Heart right ventricle (tissue), 16 donors: ENCODE measurements at regions of chr2 and their contacts with region 1.

Region 1: DNA sequence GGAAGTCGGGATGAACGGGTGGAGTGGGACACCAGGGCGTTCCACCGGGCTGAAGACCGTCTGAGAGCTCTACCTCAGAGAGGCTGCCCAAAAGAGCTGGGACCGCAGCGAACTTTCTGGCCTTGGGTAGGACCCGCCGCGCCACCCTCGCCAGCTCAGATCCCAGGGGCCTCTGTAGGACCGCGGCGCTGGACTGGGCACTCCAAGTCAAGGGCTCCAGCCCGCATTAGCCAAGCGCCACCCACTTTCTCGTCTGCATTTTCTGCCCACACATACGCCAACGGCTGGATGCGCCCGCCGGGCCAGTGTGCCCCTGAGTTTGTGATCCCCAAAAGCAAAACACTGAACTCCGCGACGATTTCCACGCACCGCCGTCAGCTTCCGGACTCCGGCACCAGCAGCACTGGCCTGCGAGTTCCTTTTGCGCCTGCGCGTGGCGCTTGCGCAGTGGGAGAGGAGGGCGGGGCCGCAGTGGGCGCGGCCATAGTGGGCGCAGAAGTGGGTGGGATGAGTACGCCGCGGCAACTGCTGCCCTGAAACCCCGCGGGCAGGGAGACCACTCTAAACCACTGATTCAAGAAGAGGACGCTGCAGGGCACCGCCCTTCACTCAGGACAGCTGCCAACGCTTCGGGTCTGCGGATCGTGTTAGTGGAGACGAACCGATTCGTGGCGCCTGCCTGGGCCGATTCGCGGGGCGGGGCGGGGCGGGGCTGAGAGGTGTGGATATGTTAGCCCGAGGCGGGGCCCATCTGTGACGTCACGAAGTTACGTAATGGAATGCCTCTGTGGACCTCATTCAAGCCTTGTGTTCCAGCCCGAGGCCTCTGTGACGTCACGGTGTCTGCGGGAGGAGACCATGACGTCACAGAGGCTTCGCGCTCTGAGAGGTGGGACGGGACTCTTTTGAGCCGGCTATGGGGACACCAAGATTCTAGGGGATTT is 10.5 kb downstream of the OSR1 start:
- DNase-seq: peak; percentile 93 to 94
- ATAC-seq: peak; percentile 94 to 99 (median 98)
- H3K4me3 ChIP-seq: peak overlapping the region; percentile 62 to 97 (median 78)
- H3K27ac ChIP-seq: peak overlapping the region; percentile 79 to 97 (median 94)
- H3K4me1 ChIP-seq: peaks cover 3 to 36% (median 29%) of the 10 kb centered on the region in 9 donors
- H3K27me3 ChIP-seq: peaks cover 0 to 36% (median 24%) of the 10 kb centered on the region in 7 donors
- CTCF ChIP-seq: no peak

Region 2: GRCh38 chr2:18435421-18436037 is 912.4 kb before region 1 on chr2:
- intact Hi-C with region 1: loop called in 1 of 10 experiments (anchors 10 kb)
- DNase-seq: peak in 1 of 2 donors; percentile 35
- ATAC-seq: peak in 3 of 8 donors; percentile 27 to 57 (median 49)
- H3K4me3 ChIP-seq: no peak overlapping the region
- H3K27ac ChIP-seq: no peak overlapping the region
- H3K4me1 ChIP-seq: peaks cover 0 to 13% (median 4%) of the 10 kb centered on the region in 9 donors
- H3K27me3 ChIP-seq: no peaks in the 10 kb centered on the region
- CTCF ChIP-seq: peak; percentile 21 to 65 (median 59)

Region 3: DNA sequence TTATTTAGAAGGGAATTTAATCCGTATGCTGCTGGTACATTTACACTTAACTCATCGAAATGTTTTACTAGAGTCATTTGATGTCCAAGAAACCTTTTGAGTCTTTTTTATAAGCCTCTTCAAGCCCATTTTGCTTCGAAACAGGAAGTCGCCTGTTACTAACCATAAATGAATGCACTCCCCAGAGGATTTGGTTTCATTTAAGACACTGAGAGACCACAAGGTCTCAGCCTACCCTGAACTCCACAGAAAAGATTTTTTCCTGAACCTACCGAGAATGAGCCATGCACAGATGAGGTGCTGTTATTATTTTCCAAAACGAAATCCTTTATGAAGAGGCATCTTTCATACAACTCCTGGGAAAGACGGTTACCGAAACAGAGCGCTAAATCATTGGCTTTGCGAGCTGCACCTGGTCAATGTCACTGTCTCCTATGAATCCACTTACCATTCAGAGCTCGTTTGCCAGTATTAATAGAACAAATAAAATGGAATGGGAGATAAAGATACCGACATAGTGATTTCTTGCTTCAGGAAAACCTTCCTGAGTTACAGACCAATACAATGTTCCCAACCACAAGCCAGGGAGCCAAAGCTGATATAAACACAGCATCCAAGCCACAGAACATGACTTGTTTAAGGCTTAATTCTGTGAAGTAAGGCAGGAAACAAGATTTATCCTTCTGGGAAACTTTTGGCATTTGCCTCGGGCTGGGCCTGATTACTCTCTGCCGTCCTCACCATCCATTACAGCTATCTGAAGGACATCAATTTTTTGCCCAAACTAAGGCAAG is 371.5 kb before region 1 on chr2:
- intact Hi-C with region 1: loop called in 3 of 10 experiments (anchors 5 to 10 kb)
- DNase-seq: no peak
- ATAC-seq: peak; percentile 44 to 78 (median 70)
- H3K4me3 ChIP-seq: peak overlapping the region in 6 of 10 donors; percentile 5 to 38 (median 32)
- H3K27ac ChIP-seq: peak overlapping the region; percentile 26 to 84 (median 64)
- H3K4me1 ChIP-seq: peaks cover 0 to 36% (median 18%) of the 10 kb centered on the region in 9 donors
- H3K27me3 ChIP-seq: no peaks in the 10 kb centered on the region
- CTCF ChIP-seq: no peak

Region 4: DNA sequence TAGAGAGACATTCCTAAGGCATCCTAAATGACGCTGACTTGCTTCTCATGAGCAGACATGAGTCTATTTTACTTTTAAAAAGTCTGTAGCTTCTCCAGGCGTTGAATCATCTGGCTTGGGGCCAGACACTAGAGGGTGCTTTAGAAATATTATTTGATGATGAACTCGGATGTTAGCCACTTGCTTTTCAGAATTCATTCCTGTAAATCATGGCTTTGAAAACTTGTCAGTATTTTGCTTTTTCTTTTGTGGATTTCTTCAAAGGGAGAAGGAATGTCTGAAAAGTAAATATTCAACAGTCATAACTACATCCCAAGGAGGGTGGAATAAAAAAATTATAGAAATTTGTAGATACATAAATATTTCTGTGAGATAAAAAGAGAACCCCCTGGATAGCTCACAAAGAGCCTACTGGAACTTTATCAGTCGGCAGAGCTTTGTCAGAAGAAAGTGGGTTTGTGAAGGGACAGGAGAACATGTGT is 360.3 kb before region 1 on chr2:
- intact Hi-C with region 1: loop called in 5 of 10 experiments (anchors 5 to 10 kb)
- DNase-seq: peak; percentile 29 to 81
- ATAC-seq: peak in 5 of 8 donors; percentile 58 to 68 (median 66)
- H3K4me3 ChIP-seq: no peak overlapping the region
- H3K27ac ChIP-seq: no peak overlapping the region
- H3K4me1 ChIP-seq: peaks cover 0 to 31% (median 17%) of the 10 kb centered on the region in 9 donors
- H3K27me3 ChIP-seq: no peaks in the 10 kb centered on the region
- CTCF ChIP-seq: peak in 8 of 9 donors; percentile 7 to 59 (median 34)

Region 5: GRCh38 chr2:19667085-19667484 is 319.2 kb after region 1 on chr2:
- intact Hi-C with region 1: loop called in 2 of 10 experiments (anchors 10 kb)
- DNase-seq: no peak
- ATAC-seq: peak in 1 of 8 donors; percentile 12
- H3K4me3 ChIP-seq: no peak overlapping the region
- H3K27ac ChIP-seq: no peak overlapping the region
- H3K4me1 ChIP-seq: peaks cover 0 to 8% (median 0%) of the 10 kb centered on the region in 9 donors
- H3K27me3 ChIP-seq: no peaks in the 10 kb centered on the region
- CTCF ChIP-seq: peak in 4 of 9 donors; percentile 15 to 43 (median 34)

Region 6: DNA sequence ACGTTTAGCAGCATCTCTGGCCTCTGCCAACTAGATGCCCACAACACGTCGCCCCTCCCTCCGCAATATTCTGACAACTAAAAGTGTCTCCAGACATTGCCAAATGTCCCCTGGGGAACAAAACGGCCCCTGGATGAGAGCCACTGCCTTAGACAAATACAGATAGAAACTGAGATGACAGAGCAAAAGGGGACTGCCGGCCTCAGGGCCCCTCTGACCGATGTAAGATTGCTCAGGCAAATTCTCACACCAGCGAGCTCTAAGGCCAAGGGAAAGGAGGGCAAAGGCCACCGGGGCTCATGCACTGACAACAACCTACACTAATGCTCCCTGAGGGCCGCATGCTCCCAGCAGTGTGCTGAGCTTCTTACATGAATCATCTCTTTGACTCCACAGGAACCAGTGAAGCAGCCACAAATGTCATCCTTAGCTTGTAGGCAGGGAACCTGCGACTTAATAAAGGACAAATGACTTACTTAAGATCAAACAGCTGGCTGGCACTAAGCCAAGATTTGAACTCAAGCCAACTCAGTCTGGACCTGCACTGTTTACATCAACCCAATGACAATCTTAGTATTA is 325.4 kb after region 1 on chr2:
- intact Hi-C with region 1: loop called in 2 of 10 experiments (anchors 10 kb)
- DNase-seq: peak in 1 of 2 donors; percentile 10
- ATAC-seq: peak in 5 of 8 donors; percentile 13 to 56 (median 34)
- H3K4me3 ChIP-seq: no peak overlapping the region
- H3K27ac ChIP-seq: peak overlapping the region in 2 of 10 donors; percentile 22 to 39
- H3K4me1 ChIP-seq: peaks cover 0 to 14% (median 7%) of the 10 kb centered on the region in 9 donors
- H3K27me3 ChIP-seq: no peaks in the 10 kb centered on the region
- CTCF ChIP-seq: no peak

Region 7: GRCh38 chr2:19746611-19747309 is 398.9 kb after region 1 on chr2:
- intact Hi-C with region 1: loop called in 1 of 10 experiments (anchors 10 kb)
- DNase-seq: peak in 1 of 2 donors; percentile 27
- ATAC-seq: peak; percentile 47 to 71 (median 60)
- H3K4me3 ChIP-seq: no peak overlapping the region
- H3K27ac ChIP-seq: peak overlapping the region in 2 of 10 donors; percentile 48 to 63
- H3K4me1 ChIP-seq: peaks cover 0 to 15% (median 6%) of the 10 kb centered on the region in 9 donors
- H3K27me3 ChIP-seq: no peaks in the 10 kb centered on the region
- CTCF ChIP-seq: peak in 7 of 9 donors; percentile 33 to 49 (median 36)

Region 8: GRCh38 chr2:19774805-19775176 is 426.9 kb after region 1 on chr2:
- intact Hi-C with region 1: no loop called
- DNase-seq: no peak
- ATAC-seq: no peak
- H3K4me3 ChIP-seq: no peak overlapping the region
- H3K27ac ChIP-seq: no peak overlapping the region
- H3K4me1 ChIP-seq: peaks cover 0 to 33% (median 6%) of the 10 kb centered on the region in 9 donors
- H3K27me3 ChIP-seq: no peaks in the 10 kb centered on the region
- CTCF ChIP-seq: no peak